SK-N-SH (cell line): ENCODE measurements at regions of chr17 and their contacts with region 1.

Region 1: GRCh38 chr17:38584350-38584925 is 21.3 kb downstream of the SRCIN1 start:
- DNase-seq: peak; percentile 86
- H3K4me3 ChIP-seq: peak overlapping the region in 1 of 2 experiments; percentile 21; a peak in 1 of 4 replicates
- H3K27ac ChIP-seq: no peak overlapping the region
- H3K4me1 ChIP-seq: peaks cover 5 to 45% of the 10 kb centered on the region in 2 experiments; a peak in 3 of 4 replicates
- H3K27me3 ChIP-seq: no peaks in the 10 kb centered on the region; the same call in none of the 2 replicates
- CTCF ChIP-seq: peak; percentile 97
- EP300 ChIP-seq: no peak
- RAD21 ChIP-seq: peak; percentile 81

Region 2: GRCh38 chr17:38550661-38551060 is 33.8 kb before region 1 on chr17:
- CTCF ChIA-PET with region 1: interaction called, 19 read pairs
- POLR2A ChIA-PET with region 1: no interaction called
- DNase-seq: no peak
- H3K4me3 ChIP-seq: no peak overlapping the region
- H3K27ac ChIP-seq: no peak overlapping the region
- H3K4me1 ChIP-seq: peaks cover 0 to 15% of the 10 kb centered on the region in 2 experiments; a peak in 2 of 4 replicates
- H3K27me3 ChIP-seq: no peaks in the 10 kb centered on the region
- CTCF ChIP-seq: no peak
- EP300 ChIP-seq: no peak
- RAD21 ChIP-seq: no peak

Region 3: GRCh38 chr17:38563362-38564253 is 20.8 kb before region 1 on chr17:
- CTCF ChIA-PET with region 1: interaction called, 167 read pairs
- POLR2A ChIA-PET with region 1: interaction called, 6 read pairs
- DNase-seq: no peak
- H3K4me3 ChIP-seq: no peak overlapping the region
- H3K27ac ChIP-seq: no peak overlapping the region
- H3K4me1 ChIP-seq: peaks cover 0 to 25% of the 10 kb centered on the region in 2 experiments; a peak in 2 of 4 replicates
- H3K27me3 ChIP-seq: peaks cover 9% of the 10 kb centered on the region; the same call in 1 of the 2 replicates
- CTCF ChIP-seq: no peak
- EP300 ChIP-seq: no peak
- RAD21 ChIP-seq: no peak

Region 4: DNA sequence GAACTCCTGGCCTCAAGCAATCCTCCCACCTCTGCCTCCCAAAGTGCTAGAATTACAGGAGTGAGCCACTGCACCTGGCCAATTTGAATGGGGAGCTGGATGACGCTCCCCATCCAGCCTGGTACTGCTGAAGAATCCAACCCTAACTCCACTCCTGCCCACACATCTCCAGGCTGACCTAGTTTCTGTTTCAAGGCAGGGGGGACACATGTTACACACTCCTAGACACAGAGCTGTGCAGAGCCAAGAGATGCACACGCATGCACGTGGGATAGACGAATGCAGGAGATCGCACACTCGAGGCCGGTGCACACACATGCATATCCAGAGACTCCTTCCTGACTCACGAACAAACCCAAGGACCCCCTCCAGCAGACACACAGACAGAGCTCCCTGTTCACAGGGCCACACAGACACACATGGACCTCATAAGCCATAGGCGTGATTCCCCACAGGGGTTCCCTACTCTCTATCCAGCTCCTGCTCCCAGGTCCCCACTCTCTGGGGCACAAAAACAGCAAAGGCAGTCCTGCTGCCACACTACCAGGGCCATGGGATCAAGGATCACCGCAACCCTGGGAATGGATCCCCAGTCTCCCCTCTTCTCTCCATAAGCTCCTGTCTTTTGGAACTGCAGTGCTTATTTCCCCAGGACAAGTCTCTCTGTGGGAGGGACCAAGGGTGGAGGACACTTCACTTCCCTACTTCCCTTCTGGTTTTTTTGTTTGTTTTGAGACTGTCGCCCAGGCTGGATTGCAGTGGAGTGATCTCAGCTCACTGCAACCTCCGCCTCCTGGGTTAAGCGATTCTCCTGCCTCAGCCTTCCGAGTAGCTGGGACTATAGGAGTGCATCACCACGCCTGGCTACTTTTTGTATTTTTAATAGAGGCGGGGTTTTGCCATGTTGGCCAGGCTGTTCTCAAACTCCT is 75.9 kb after region 1 on chr17:
- CTCF ChIA-PET with region 1: interaction called, 33 read pairs
- POLR2A ChIA-PET with region 1: no interaction called
- DNase-seq: no peak
- H3K4me3 ChIP-seq: no peak overlapping the region
- H3K27ac ChIP-seq: no peak overlapping the region
- H3K4me1 ChIP-seq: peaks cover 0 to 4% of the 10 kb centered on the region in 2 experiments; a peak in 1 of 4 replicates
- H3K27me3 ChIP-seq: no peaks in the 10 kb centered on the region; the same call in 1 of the 2 replicates
- CTCF ChIP-seq: no peak
- EP300 ChIP-seq: no peak
- RAD21 ChIP-seq: no peak